ENCODE measurements at regions of chr7 and their contacts with region 1.

Region 1: GRCh38 chr7:151570366-151570915 is 50.7 kb upstream of the RHEB start:
- DNase-seq: peak; percentile 12
- ATAC-seq: no peak
- H3K4me3 ChIP-seq: no peak overlapping the region
- H3K27ac ChIP-seq: no peak overlapping the region
- H3K4me1 ChIP-seq: peaks cover 0 to 9% of the 10 kb centered on the region in 2 experiments; a peak in 1 of 4 replicates
- H3K27me3 ChIP-seq: no peaks in the 10 kb centered on the region
- CTCF ChIP-seq: peak; percentile 48 to 92 (median 66)
- POLR2A ChIP-seq: no peak
- RAD21 ChIP-seq: peak; percentile 92

Region 2: DNA sequence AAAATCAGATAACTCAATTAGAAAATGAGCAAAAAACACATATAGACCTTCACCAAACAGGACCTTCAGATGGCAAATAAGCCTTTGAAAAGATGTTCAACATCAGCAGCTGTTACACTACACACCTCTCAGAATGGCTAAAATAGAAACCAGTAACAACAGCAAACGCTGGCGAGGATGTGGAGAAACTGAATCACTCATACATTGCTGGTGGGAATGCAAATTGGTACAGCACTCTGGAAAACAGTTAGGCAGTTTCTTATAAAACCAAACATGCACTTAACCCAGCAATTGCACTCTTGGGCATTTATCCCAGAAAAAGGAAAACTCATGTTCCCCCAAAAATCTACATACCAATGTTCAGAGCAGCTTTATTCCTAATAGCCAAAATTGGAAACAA is 284.3 kb before region 1 on chr7:
- CTCF ChIA-PET with region 1: no interaction called
- POLR2A ChIA-PET with region 1: no interaction called
- RAD21 ChIA-PET with region 1: no interaction called
- intact Hi-C with region 1: no loop called
- DNase-seq: no peak
- ATAC-seq: no peak
- H3K4me3 ChIP-seq: no peak overlapping the region
- H3K27ac ChIP-seq: no peak overlapping the region
- H3K4me1 ChIP-seq: no peaks in the 10 kb centered on the region
- H3K27me3 ChIP-seq: no peaks in the 10 kb centered on the region
- CTCF ChIP-seq: no peak
- POLR2A ChIP-seq: no peak
- RAD21 ChIP-seq: no peak

Region 3: GRCh38 chr7:151705636-151706276 is 135.3 kb after region 1 on chr7:
- CTCF ChIA-PET with region 1: no interaction called
- POLR2A ChIA-PET with region 1: no interaction called
- RAD21 ChIA-PET with region 1: no interaction called
- intact Hi-C with region 1: loop called (anchors 1 kb)
- DNase-seq: peak; percentile 56
- ATAC-seq: peak; percentile 96
- H3K4me3 ChIP-seq: peak overlapping the region; percentile 25 to 33
- H3K27ac ChIP-seq: no peak overlapping the region
- H3K4me1 ChIP-seq: peaks cover 5 to 17% of the 10 kb centered on the region in 2 experiments; a peak in 3 of 4 replicates
- H3K27me3 ChIP-seq: no peaks in the 10 kb centered on the region
- CTCF ChIP-seq: peak; percentile 76 to 85 (median 82)
- POLR2A ChIP-seq: no peak
- RAD21 ChIP-seq: peak; percentile 79

Region 4: GRCh38 chr7:151744656-151745638 is 174.5 kb after region 1 on chr7:
- CTCF ChIA-PET with region 1: interaction called, 4 read pairs
- POLR2A ChIA-PET with region 1: no interaction called
- RAD21 ChIA-PET with region 1: no interaction called
- intact Hi-C with region 1: loop called (anchors 1 kb)
- DNase-seq: peak; percentile 64
- ATAC-seq: peak; percentile 97
- H3K4me3 ChIP-seq: peak overlapping the region in 1 of 2 experiments; percentile 33; a peak in 2 of 4 replicates
- H3K27ac ChIP-seq: no peak overlapping the region
- H3K4me1 ChIP-seq: peaks cover 12 to 27% of the 10 kb centered on the region in 2 experiments
- H3K27me3 ChIP-seq: no peaks in the 10 kb centered on the region
- CTCF ChIP-seq: peak; percentile 48 to 73 (median 68); a peak in 5 of 6 replicates
- POLR2A ChIP-seq: no peak
- RAD21 ChIP-seq: peak; percentile 67

Region 5: DNA sequence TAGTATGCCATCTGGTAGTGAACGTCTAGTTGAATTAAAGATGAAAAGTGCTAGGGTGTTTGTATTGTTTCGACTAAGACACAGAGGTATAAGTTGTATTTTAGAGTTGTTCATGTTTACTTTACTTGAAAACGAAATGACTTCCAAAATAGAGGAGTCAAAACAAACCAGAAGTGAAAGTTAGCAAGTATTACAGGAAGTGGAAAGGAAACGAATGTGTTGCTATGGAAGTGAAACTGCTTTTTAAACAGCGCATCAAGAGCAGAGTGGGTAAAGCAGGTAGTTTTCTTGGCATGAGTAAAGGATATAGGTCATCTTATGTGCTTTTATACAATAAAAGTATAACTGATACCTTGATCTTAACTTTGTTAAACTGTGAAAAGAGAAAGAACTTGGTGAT is 365.8 kb after region 1 on chr7:
- CTCF ChIA-PET with region 1: no interaction called
- POLR2A ChIA-PET with region 1: no interaction called
- RAD21 ChIA-PET with region 1: no interaction called
- intact Hi-C with region 1: loop called (anchors 5 kb)
- DNase-seq: no peak
- ATAC-seq: no peak
- H3K4me3 ChIP-seq: no peak overlapping the region
- H3K27ac ChIP-seq: no peak overlapping the region
- H3K4me1 ChIP-seq: peaks cover 0 to 10% of the 10 kb centered on the region in 2 experiments; a peak in 2 of 4 replicates
- H3K27me3 ChIP-seq: no peaks in the 10 kb centered on the region
- CTCF ChIP-seq: no peak
- POLR2A ChIP-seq: no peak
- RAD21 ChIP-seq: no peak